GM10248 (cell line): ENCODE measurements at regions of chr17 and their contacts with region 1.

Region 1: GRCh38 chr17:27654654-27655524 is 23.9 kb downstream of the LGALS9 start:
- DNase-seq: peak; percentile 85
- CTCF ChIP-seq: peak; percentile 82

Region 2: DNA sequence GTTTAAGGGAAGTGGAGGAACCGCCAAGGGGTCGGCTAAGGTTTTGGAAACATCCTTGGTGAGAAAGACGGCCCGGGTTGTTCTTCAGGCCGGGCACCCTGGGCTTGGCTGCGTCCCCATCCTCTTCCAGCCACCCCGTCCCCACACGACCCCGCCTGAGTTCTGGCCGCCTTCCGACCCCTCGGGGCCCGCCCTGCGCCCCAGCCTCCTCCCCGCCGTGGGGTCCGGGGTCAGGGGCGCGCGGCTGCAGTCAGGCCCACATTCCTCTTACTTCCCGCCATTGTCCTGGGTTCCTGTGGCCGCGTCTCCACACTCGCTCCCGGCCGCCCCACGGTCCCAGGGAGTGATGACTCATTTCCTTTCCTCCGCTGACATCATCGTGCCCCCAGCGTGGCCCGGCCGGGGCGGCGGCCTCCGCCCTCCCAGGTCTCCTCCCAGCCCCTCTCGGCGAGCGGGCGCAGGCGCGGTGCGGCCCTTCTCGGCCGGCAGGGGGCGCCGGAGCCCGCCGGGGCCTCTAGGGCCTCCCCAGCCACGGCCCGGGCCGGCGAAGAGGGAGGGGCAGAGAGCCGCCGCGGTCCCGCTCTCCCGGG is 301.3 kb before region 1 on chr17:
- CTCF ChIA-PET with region 1: interaction called, 12 read pairs
- POLR2A ChIA-PET with region 1: no interaction called
- DNase-seq: peak; percentile 97
- CTCF ChIP-seq: peak; percentile 92

Region 3: GRCh38 chr17:27381007-27381501 is 273.8 kb before region 1 on chr17:
- CTCF ChIA-PET with region 1: interaction called, 12 read pairs
- POLR2A ChIA-PET with region 1: no interaction called
- DNase-seq: peak; percentile 91
- CTCF ChIP-seq: peak; percentile 98

Region 4: GRCh38 chr17:27622986-27623385 is 31.9 kb before region 1 on chr17:
- CTCF ChIA-PET with region 1: interaction called, 11 read pairs
- POLR2A ChIA-PET with region 1: no interaction called
- DNase-seq: no peak
- CTCF ChIP-seq: no peak

Region 5: DNA sequence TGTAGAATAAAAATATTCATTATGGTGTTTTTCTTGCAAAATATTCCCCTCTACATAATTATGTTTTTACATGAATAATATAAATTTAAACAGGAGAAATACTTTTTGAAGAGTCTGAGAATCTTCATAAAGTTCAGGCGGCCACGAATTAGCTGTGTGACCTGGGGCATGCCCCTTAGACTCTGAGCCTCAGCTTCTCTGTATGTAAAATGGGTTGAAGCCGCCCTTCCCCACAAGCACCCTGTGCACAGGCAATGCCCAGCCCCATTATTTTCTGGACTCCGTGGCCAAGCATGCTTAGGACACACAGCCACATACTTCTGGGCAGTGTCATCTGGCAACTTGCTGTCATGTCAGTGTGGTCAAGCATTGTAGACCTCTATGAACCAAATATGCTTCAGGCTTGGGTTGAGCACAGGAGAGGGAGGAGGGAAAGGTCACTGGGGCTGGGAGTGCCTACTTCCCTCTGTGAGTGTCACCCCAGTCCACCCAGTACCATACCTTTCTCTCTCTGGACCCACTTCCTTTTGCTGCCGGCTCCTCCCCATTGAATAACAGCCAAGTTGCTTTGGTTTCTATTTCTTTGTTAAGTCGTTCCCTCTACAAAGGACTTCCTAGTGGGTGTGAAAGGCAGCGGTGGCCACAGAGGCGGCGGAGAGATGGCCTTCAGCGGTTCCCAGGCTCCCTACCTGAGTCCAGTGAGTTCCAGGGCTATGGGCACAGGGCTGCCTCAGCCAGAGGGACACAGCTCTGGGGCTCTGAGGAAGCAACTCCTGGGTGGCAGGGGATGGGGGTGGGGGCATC is 24.1 kb before region 1 on chr17 and contains the start of gene LGALS9:
- CTCF ChIA-PET with region 1: interaction called, 37 read pairs
- POLR2A ChIA-PET with region 1: no interaction called
- DNase-seq: peak; percentile 70
- CTCF ChIP-seq: no peak

Region 6: GRCh38 chr17:27640790-27641189 is 14.1 kb before region 1 on chr17:
- CTCF ChIA-PET with region 1: interaction called, 37 read pairs
- POLR2A ChIA-PET with region 1: no interaction called
- DNase-seq: no peak
- CTCF ChIP-seq: no peak

Region 7: DNA sequence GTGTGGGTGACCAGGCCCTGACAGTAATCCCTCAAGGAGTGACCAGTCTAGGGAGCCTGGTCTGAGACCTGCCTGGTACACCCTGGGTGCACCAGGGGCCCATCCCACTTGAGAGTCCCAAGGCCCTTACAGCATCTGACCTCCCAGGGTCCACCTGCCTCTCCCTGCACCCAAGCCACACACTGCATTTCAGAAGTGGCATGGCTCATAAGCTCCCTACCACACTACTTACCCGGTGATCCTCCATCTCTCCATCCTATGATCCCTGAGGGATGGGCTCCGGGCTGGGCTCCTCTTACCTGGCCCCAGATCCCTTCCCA is 16.7 kb after region 1 on chr17:
- CTCF ChIA-PET with region 1: no interaction called
- POLR2A ChIA-PET with region 1: no interaction called
- DNase-seq: no peak
- CTCF ChIP-seq: no peak

Region 8: DNA sequence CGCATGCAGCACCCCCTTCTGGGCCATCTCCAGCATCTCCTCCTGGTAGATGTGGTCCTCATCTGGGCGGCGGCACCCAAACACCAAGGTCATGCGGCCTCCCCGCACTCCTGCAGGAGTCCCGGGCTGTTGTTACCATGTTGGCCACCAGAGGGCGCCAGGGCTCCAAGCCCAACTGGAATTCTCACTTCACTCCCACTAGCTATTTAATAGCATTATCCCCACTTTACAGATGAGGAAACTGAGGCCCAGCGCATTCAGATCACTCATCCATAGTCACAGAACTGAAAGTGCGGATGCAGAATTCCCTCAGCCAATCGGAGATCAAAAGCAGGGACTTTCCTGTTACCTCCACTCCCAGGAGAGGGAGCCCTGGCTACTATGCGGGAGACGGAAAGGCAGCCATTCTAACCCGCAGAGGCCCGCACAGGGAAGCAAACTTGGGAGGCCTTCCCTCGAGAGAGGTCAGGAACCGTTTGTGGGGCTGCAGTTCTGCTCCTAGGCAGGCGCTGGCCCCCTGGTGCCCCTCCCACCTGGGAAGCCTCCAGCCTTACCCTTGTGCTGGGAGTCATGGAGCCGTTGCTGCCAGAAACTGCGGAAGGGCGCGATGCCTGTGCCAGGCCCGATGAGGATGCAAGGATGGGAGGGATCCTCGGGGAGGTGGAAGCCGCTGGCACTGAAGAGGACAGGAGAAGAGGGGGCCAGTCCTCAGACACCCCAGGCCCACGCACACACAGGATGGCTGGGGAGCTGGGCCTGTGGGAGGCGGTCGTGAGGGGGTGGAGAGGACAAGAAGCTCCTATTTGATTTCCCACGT is 105.4 kb after region 1 on chr17:
- CTCF ChIA-PET with region 1: interaction called, 65 read pairs
- POLR2A ChIA-PET with region 1: no interaction called
- DNase-seq: peak; percentile 73
- CTCF ChIP-seq: peak; percentile 94